ENCODE measurements at regions of chr2 and their contacts with region 1.

Region 1: GRCh38 chr2:164757924-164758695 is 83.5 kb downstream of the COBLL1 start:
- DNase-seq: peak; percentile 33
- H3K4me3 ChIP-seq: peak overlapping the region; percentile 36
- H3K27ac ChIP-seq: no peak overlapping the region
- H3K4me1 ChIP-seq: peaks cover 80% of the 10 kb centered on the region
- CTCF ChIP-seq: no peak

Region 2: DNA sequence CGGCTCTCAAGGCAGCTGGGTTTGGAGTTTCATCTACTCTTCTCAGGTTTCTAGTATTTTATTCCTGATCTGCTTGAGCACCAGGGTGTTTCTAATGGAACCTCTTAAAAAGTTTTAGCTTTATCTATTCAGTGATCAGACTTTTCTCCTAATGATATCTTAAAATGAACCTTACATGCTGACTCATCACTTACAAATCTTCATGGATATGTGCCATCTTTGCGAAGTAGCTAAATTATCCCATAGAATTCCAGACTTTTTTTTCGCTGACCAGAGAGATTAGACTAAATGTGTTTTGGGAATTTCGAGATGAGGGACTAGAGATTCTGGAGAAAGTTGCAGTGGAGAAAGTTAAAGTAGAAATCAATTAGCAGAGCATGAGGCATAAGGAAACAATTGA is 537.8 kb before region 1 on chr2:
- CTCF ChIA-PET with region 1: no interaction called
- POLR2A ChIA-PET with region 1: no interaction called
- intact Hi-C with region 1: no loop called
- DNase-seq: no peak
- H3K4me3 ChIP-seq: no peak overlapping the region
- H3K27ac ChIP-seq: no peak overlapping the region
- H3K4me1 ChIP-seq: no peaks in the 10 kb centered on the region
- CTCF ChIP-seq: no peak

Region 3: DNA sequence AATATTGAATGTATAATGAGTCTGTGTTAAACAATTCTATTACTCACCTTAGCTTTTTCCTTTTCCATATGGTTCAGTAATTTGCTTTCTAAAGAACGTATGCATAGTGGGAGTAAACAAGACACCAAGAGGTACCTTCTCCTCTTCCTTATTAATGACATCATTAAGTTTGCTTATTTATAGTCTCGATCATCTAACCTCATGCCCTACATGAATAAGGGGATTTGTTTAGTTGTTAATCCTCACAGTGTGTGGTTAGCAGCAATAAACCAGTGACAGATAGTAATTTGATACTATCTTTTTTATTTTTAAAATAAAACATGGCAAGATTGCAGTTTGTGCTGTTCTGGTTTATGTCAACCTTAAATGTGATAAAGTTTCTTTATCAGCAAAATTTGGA is 13.8 kb after region 1 on chr2:
- CTCF ChIA-PET with region 1: no interaction called
- POLR2A ChIA-PET with region 1: interaction called, 11 read pairs
- intact Hi-C with region 1: no loop called
- DNase-seq: no peak
- H3K4me3 ChIP-seq: no peak overlapping the region
- H3K27ac ChIP-seq: no peak overlapping the region
- H3K4me1 ChIP-seq: no peaks in the 10 kb centered on the region
- CTCF ChIP-seq: no peak

Region 4: GRCh38 chr2:164826293-164827243 is 68.5 kb after region 1 on chr2:
- CTCF ChIA-PET with region 1: no interaction called
- POLR2A ChIA-PET with region 1: interaction called, 4 read pairs
- intact Hi-C with region 1: loop called (anchors 5 kb)
- DNase-seq: no peak
- H3K4me3 ChIP-seq: no peak overlapping the region
- H3K27ac ChIP-seq: no peak overlapping the region
- H3K4me1 ChIP-seq: no peaks in the 10 kb centered on the region
- CTCF ChIP-seq: no peak

Region 5: DNA sequence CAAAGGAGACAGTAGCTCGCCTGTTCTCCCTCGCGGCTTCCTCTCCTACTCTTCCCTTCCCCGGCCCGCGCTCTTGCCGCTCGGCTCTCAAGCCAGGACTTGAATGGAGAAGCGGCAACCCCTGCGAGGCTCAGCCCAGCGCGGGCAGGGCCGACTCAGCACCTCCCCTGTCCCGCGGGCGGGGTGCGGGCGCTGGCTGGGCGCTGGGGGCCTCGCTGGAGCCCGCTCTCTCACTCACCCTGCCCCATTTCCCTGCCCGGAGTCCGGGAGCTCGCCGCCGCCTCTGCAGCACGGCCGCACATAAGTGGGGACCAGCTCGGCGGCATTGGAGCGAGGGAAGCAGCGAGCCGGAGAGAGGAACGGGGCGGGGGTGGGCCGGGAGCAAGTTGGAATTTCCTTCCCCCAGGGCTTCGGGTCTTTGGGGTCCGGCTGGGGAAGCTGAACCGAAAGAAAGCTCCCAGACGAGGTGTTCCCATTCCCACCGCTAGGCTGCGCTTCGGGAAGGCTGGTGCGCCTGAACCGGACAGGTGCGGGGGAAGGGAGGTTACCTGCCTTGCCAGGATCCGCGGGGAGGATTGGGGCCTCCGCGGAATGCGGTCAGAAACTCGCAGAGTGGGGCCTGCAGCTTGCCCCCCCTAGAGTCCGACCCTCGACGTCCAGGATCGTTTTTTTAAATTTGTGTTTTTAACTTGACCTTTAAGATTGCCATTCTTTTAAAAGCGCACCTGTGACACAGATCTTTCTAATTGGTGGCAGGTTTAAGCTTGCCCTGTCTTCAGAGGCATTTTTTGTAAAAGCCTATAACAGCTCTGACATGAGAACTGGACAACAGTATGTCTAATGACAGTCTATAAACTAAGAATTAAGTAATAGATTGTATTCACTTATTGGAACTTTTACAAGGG is 83.9 kb after region 1 on chr2 and contains the start of gene COBLL1:
- CTCF ChIA-PET with region 1: no interaction called
- POLR2A ChIA-PET with region 1: interaction called, 8 read pairs
- intact Hi-C with region 1: loop called (anchors 2 kb)
- DNase-seq: peak; percentile 29
- H3K4me3 ChIP-seq: peak within 1 kb of the TSS; percentile 65
- H3K27ac ChIP-seq: no peak within 1 kb of the TSS
- H3K4me1 ChIP-seq: peaks cover 3% of the 10 kb centered on the region
- CTCF ChIP-seq: peak; percentile 72
- total RNA-seq, gene COBLL1: 0.79 and 0.88 TPM in 2 replicates

Region 6: GRCh38 chr2:164868563-164869419 is 110.7 kb after region 1 on chr2:
- CTCF ChIA-PET with region 1: no interaction called
- POLR2A ChIA-PET with region 1: interaction called, 3 read pairs
- intact Hi-C with region 1: loop called (anchors 1 kb)
- DNase-seq: no peak
- H3K4me3 ChIP-seq: no peak overlapping the region
- H3K27ac ChIP-seq: no peak overlapping the region
- H3K4me1 ChIP-seq: peaks cover 15% of the 10 kb centered on the region
- CTCF ChIP-seq: no peak

Region 7: GRCh38 chr2:164910101-164910899 is 152.2 kb after region 1 on chr2:
- CTCF ChIA-PET with region 1: interaction called, 3 read pairs
- POLR2A ChIA-PET with region 1: interaction called, 4 read pairs
- intact Hi-C with region 1: loop called (anchors 1 kb)
- DNase-seq: peak; percentile 41
- H3K4me3 ChIP-seq: no peak overlapping the region
- H3K27ac ChIP-seq: no peak overlapping the region
- H3K4me1 ChIP-seq: peaks cover 4% of the 10 kb centered on the region
- CTCF ChIP-seq: no peak

Measured in OCI-LY7 (cell line).